ENCODE measurements at regions of chr16 and their contacts with region 1.

Region 1: DNA sequence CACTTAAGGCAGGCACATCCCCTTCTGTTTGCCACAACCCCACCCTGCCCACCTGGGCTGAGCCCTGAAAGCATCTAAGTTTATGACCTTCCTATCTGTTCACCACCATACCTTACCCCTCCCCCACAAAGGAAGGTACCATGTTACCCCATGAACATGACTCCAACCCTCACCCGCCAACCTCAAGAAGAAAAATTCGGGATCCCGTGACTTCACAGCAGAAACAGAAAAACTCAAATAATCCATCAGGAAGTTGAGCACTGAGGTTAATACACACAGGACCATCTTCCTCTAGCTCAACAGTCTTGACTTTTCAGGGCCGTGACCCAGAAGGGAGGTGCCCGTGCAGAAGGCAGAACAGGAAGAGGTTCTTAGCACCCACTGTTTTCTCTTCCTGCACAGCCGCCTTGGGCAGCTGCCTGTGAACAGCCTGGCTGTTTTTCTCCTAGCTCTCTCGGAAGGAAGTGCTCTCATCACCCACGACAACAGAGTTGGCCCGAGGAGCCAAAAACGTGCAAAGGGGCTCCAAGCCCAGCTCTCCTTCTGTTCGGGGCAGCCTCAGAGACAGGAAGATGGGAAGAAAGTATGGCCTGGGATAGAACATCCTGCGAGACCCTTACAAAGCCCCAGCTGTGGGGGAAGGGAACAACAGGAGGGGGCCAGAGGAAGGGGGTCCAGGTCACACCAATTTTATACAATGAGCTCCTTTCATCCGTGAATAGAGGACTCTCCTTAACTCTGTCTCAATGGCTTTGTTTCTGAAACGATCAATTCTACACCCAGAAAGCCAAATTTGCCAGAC is 101.1 kb downstream of the XYLT1 start:
- DNase-seq: peak; percentile 54 to 77 (median 64)
- ATAC-seq: peak; percentile 68 to 89 (median 84)
- H3K4me3 ChIP-seq: peak overlapping the region in 1 of 12 donors; percentile 44
- H3K27ac ChIP-seq: peak overlapping the region in 6 of 12 donors; percentile 9 to 91 (median 34)
- H3K4me1 ChIP-seq: peaks cover 0 to 76% (median 18%) of the 10 kb centered on the region in 12 donors
- H3K27me3 ChIP-seq: no peaks in the 10 kb centered on the region
- CTCF ChIP-seq: no peak
- POLR2A ChIP-seq: no peak

Region 2: GRCh38 chr16:17211797-17212196 is 157.8 kb before region 1 on chr16:
- intact Hi-C with region 1: loop called in 1 of 10 experiments (anchors 10 kb)
- DNase-seq: no peak
- ATAC-seq: no peak
- H3K4me3 ChIP-seq: no peak overlapping the region
- H3K27ac ChIP-seq: no peak overlapping the region
- H3K4me1 ChIP-seq: no peaks in the 10 kb centered on the region
- H3K27me3 ChIP-seq: no peaks in the 10 kb centered on the region
- CTCF ChIP-seq: peak in 5 of 12 donors; percentile 7 to 20 (median 11)
- POLR2A ChIP-seq: no peak

Region 3: DNA sequence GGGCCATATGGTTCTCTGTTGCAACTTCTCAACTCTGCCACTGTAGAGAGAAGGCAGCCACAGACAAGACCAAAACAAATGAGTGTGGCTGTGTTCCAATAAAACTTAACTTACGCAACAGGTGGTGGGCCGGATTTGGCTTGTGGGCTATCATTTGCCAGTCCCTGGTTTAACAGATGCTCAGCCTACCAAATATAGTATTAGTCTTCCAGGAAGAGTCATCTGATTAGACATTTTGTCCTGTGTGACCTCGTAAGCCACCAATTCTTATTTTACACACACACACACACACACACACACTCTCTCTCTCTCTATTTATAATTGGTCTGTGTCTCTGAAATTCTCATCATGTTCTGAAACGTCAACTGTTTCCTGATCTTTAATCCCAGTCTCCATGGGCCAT is 144.7 kb before region 1 on chr16:
- intact Hi-C with region 1: loop called in 1 of 10 experiments (anchors 10 kb)
- DNase-seq: peak in 4 of 5 donors; percentile 38 to 64 (median 62)
- ATAC-seq: peak; percentile 70 to 93 (median 90)
- H3K4me3 ChIP-seq: no peak overlapping the region
- H3K27ac ChIP-seq: peak overlapping the region in 6 of 12 donors; percentile 26 to 79 (median 52)
- H3K4me1 ChIP-seq: peaks cover 0 to 30% (median 11%) of the 10 kb centered on the region in 12 donors
- H3K27me3 ChIP-seq: no peaks in the 10 kb centered on the region
- CTCF ChIP-seq: no peak
- POLR2A ChIP-seq: no peak

Region 4: DNA sequence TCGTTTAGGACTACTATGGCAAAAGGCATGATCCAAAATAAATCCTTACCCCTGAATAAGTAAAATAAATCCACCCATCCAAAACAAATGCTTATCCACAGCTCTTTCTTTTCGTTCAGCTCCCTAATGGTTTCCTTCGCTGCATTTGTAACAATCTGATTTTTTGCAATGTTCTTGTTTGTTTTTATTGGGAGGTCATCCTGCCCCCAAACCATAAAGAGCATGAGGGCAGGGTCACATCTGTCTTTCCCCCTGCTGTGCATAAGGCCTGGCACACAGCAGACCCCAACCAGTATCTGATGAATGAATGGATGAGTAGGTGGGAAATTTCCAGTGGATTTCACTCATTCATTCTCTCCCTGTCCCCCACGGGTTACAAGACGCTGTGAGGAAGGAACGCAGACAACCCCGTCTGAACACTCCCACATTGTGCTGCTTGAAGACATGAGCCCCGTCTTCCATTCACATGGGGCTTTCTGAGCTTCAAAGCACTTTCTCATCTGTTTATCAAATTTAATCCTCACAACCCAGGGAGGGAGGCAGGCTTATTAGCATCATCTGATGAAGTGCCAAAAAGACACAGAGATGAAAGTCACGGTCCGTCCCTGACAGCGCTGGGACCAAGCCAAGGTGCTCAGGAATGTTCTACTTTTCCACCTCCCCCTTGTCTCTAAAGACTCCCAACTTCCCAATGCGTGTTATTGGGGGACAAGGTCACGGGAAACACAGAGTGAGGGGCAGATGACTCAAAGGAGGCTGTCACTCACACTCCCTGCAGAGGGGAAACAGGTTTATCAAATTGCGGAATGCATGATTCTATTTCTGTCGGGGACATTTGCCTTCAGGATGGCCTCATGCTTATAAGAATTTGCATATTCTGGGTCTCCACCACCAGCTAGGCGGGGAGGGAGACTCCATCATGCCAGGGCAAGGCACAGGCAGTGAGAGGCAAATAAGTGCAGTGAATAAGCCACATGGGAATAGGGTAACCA is 90.2 kb after region 1 on chr16:
- intact Hi-C with region 1: loop called in 1 of 10 experiments (anchors 10 kb)
- DNase-seq: no peak
- ATAC-seq: peak in 2 of 4 donors; percentile 31 to 51
- H3K4me3 ChIP-seq: peak overlapping the region in 1 of 12 donors; percentile 8
- H3K27ac ChIP-seq: no peak overlapping the region
- H3K4me1 ChIP-seq: peaks cover 0 to 23% (median 6%) of the 10 kb centered on the region in 12 donors
- H3K27me3 ChIP-seq: peaks cover 0 to 4% (median 0%) of the 10 kb centered on the region in 9 donors
- CTCF ChIP-seq: no peak
- POLR2A ChIP-seq: no peak

Measured in heart left ventricle (tissue), 16 donors.